Ascending aorta (tissue), 2 donors: ENCODE measurements at regions of chr12 and their contacts with region 1.

Region 1: DNA sequence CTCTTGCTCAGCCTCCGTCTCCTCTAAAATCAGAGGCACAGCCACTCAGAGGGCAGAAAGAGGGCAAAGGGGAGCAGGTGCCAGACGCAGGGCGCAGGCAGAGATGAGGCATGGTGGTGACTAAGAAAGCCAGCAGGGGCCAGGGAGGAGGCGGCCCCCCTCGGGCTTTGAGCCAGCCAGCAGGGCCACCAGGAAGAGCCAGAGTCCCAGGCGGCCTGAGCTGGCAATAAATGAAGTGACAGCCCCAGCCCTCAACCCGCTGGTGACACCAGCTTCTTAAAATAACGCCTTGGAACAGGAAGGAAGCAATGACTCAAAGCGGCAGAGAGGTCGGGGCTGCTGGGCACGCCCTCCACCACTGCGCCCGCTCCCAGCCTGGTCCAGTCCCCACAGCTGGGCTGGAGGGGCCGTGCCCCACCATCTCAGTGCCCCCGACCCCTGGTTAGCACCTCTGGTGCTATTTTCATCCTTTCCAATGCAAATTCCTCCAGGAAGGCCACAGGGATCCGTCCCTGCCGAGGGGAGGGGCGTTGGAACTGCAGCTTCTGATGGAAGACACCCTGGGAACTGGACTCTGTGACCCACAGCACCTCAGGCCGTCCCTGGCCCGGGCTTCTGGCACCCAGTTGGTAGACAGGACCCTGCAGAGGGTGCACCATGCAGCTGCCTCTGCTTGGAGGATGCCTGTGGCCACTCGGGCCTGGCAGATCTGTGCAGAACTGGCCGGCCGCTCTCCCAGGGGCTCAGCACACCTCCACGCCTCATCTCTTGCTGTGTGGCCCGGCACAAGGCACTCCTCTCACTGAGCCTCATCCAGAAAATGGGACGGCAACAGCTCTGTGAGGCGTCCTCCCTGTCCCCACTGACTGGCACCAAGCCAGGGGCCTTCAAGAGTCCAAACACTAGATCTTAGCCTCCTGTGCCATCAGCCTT is 113.7 kb downstream of the NCOR2 start:
- DNase-seq: peak; percentile 92 to 98
- H3K4me3 ChIP-seq: peak overlapping the region in 1 of 2 donors; percentile 5
- H3K27ac ChIP-seq: peak overlapping the region; percentile 91 to 99
- H3K4me1 ChIP-seq: peaks cover 43 to 44% of the 10 kb centered on the region in 2 donors
- H3K27me3 ChIP-seq: no peaks in the 10 kb centered on the region
- CTCF ChIP-seq: peak in 1 of 3 experiments; percentile 9

Region 2: DNA sequence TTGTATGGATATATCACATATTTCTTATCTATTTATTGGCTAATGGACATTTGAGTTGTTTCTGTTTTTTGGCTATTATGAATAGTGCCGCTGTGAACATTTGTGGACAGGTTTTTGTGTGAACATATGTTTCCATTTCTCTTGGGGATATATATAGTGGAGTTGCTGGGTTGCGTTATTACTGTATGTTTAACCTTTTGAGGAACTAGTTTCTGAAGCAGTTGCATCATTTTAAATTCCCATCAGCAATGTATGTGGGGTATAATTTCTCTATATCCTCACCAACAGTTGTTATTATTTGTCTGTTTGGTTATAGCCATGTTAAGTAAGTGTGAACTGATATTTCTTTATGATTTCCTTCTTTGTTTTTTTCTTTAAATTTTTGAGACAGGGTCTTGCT is 772.1 kb before region 1 on chr12:
- intact Hi-C with region 1: no loop called
- DNase-seq: no peak
- H3K4me3 ChIP-seq: no peak overlapping the region
- H3K27ac ChIP-seq: no peak overlapping the region
- H3K4me1 ChIP-seq: no peaks in the 10 kb centered on the region
- H3K27me3 ChIP-seq: no peaks in the 10 kb centered on the region
- CTCF ChIP-seq: no peak

Region 3: GRCh38 chr12:124369055-124369900 is 84.4 kb before region 1 on chr12:
- intact Hi-C with region 1: loop called (anchors 2 kb)
- DNase-seq: peak; percentile 61 to 95
- H3K4me3 ChIP-seq: peak overlapping the region in 1 of 2 donors; percentile 37
- H3K27ac ChIP-seq: peak overlapping the region; percentile 83 to 87
- H3K4me1 ChIP-seq: peaks cover 26 to 34% of the 10 kb centered on the region in 2 donors
- H3K27me3 ChIP-seq: no peaks in the 10 kb centered on the region
- CTCF ChIP-seq: peak; percentile 46 to 73 (median 49)

Region 4: DNA sequence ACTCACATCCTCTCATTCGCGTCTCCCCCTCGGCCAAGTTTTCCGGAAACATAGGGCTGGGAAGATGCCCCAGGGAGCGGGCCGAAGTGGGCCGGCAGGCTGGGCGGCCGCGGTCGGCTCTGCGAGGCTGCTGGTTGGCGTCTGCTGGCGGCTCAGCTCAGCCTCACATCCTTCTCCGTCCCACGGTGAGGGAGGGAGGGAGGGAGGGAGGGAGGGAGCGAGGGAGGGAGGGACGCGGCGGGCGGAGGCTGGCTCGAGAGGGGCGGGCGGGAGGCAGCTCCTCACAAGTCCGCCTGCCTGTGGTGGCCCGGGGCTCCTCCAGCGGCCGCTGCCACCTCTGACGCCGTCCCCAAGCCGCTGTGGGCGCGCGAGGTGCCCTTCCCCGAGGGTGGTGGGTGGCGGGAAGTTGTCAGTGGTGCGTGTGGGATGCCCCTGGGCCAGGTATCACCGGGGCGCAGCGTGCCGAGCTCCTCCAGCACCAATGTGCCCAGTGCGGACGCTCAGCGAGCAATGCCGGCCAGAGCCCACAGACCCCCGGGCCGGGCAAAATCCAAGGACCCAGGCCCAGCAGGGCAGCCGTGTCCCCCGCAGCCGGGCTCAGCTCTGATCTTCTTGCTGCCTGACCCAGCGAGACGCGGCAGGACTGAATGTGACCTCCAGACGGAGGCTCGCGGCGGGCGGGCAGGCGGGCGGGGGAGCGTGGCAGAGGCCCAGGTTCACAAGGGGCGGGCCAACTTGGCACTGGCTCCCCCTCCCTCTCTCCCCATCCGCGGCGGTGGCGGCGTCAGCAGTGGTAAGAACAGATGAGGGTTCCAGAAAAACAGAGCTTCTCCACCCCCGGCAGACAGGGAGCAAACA is 64.8 kb before region 1 on chr12:
- intact Hi-C with region 1: loop called (anchors 2 kb)
- DNase-seq: peak; percentile 70 to 95
- H3K4me3 ChIP-seq: peak overlapping the region; percentile 59 to 67
- H3K27ac ChIP-seq: peak overlapping the region; percentile 90 to 94
- H3K4me1 ChIP-seq: peaks cover 36 to 66% of the 10 kb centered on the region in 2 donors
- H3K27me3 ChIP-seq: no peaks in the 10 kb centered on the region
- CTCF ChIP-seq: peak in 2 of 3 experiments; percentile 7 to 9

Region 5: DNA sequence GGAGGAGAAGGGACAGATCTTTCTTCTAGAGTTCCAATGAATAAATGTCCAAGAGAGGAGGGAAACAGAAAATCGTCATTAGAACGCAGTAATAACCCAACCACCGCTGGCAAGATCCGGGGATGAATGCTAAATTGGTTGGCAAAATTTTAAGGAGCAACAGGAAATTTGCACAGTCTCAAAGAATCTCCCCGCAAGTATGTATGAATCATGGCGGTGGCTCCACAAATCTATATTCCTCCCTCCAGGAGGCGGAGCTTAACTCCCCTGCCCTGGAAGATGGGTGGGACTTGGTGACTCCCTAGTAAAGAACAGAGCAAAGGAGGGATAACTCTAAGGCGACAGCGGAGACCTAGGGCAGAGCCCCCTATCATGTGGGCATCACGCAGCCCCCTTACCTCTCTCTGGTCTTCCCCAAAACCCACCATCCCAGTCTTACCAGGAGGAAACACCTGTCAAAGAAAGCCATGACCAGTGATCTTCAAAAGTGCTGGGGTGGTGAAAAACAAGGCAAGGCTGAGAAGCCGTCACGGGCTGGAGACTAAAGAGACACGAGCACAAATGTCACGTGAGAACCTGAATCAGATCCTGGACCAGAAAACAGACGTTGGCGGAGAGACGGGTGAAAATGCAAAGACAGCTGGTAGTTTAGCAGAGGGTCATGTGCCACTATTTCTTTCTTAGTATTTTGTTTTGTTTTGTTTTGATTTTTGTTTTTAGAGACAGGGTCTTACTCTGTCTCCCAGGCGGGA is 12.1 kb before region 1 on chr12:
- intact Hi-C with region 1: loop called (anchors 1 kb)
- DNase-seq: peak; percentile 47 to 91
- H3K4me3 ChIP-seq: peak overlapping the region in 1 of 2 donors; percentile 12
- H3K27ac ChIP-seq: peak overlapping the region; percentile 79 to 83
- H3K4me1 ChIP-seq: peaks cover 20 to 27% of the 10 kb centered on the region in 2 donors
- H3K27me3 ChIP-seq: no peaks in the 10 kb centered on the region
- CTCF ChIP-seq: no peak

Region 6: GRCh38 chr12:124567661-124568373 is 114.1 kb after region 1 on chr12:
- intact Hi-C with region 1: loop called (anchors 2 kb)
- DNase-seq: peak; percentile 83 to 96
- H3K4me3 ChIP-seq: peak overlapping the region; percentile 39 to 75
- H3K27ac ChIP-seq: peak overlapping the region; percentile 88 to 91
- H3K4me1 ChIP-seq: peaks cover 16 to 44% of the 10 kb centered on the region in 2 donors
- H3K27me3 ChIP-seq: no peaks in the 10 kb centered on the region
- CTCF ChIP-seq: no peak

Region 7: DNA sequence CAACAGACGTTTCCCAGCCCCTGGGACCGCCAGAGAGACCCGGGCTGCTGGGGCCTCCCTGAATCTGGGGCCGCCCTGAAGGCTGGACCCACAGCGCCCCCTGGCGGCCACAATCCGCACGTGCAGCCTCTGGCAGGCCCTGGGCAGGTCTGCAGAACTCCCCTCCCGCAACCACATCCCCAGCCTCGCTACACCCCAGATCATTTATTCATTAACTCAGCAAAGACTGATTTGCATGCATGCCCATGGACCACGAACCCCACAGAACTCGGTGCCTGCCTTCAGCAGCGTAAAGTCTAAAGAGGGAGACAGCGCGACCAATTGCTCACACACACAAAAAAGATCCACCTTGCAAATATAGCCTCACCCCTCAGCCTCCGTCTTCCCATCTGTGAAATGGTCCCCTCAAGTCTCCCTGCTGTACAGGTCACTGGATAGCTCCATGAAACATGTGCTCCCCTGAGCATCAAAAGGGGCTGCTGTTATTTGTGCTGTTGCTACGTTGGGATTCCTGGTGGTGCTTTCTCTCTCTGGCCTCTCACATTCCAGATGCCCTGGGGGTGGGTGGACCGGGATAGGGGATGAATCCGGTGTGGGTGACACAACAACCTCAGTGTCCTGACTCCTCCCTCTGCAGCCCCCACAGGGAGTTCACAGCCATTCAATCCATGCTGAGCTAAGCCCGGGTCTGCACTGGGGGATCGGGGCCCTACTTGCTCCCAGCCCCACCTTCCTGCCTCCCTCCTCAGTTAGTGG is 313.6 kb after region 1 on chr12:
- intact Hi-C with region 1: loop called (anchors 2 kb)
- DNase-seq: peak in 1 of 2 donors; percentile 89
- H3K4me3 ChIP-seq: no peak overlapping the region
- H3K27ac ChIP-seq: peak overlapping the region in 1 of 2 donors; percentile 79
- H3K4me1 ChIP-seq: peaks cover 24 to 37% of the 10 kb centered on the region in 2 donors
- H3K27me3 ChIP-seq: no peaks in the 10 kb centered on the region
- CTCF ChIP-seq: peak; percentile 97 to 100 (median 99)